A549 (cell line): ENCODE measurements at regions of chr10 and their contacts with region 1.

Region 1: DNA sequence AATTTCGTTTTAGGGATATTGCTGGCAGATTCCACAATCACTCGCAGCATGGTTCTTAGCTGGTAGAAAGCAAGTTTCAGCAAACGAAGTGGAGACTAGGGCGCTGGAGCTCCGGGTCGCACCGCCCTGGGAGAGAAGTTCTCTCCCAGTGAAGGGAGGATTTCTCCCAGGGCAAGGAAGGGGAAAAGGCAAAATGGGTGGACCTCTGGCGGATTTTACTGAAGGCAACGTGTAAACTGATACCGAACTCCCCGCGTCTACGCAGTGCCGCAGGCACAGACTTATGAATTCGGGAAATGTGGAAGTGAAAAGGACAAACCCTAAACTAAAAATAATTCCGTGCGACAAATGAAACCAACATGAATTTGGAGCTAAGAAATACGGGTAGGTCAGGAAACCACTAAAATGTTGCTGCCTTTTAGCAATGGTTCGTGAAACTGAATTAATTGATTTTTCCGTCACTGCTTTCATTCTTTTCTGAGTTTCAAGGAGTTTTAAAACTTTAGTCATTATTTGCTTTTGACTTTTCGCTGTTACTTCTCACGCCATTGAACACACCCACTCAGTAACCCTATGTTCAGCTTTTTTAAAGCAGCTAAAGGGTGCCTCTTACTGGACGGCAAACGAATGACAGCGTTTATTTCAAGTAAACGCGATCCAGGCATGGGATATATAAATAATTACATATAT is at the start of gene MYOF:
- DNase-seq: peak; percentile 87 to 91
- ATAC-seq: peak; percentile 84 to 93
- H3K4me3 ChIP-seq: peak within 1 kb of the TSS; percentile 61
- H3K27ac ChIP-seq: peak within 1 kb of the TSS; percentile 93
- H3K4me1 ChIP-seq: peaks cover 30% of the 10 kb centered on the region
- CTCF ChIP-seq: peak; percentile 63
- EP300 ChIP-seq: no peak
- POLR2A ChIP-seq: peak; percentile 68
- RAD21 ChIP-seq: peak; percentile 85 to 90
- polyA plus RNA-seq, gene MYOF: 229 and 265 TPM in 2 replicates

Region 2: GRCh38 chr10:93180482-93180931 is 301.8 kb before region 1 on chr10:
- CTCF ChIA-PET with region 1: no interaction called
- POLR2A ChIA-PET with region 1: no interaction called
- DNase-seq: no peak
- ATAC-seq: no peak
- H3K4me3 ChIP-seq: no peak overlapping the region
- H3K27ac ChIP-seq: no peak overlapping the region
- H3K4me1 ChIP-seq: no peaks in the 10 kb centered on the region
- CTCF ChIP-seq: no peak
- EP300 ChIP-seq: no peak
- POLR2A ChIP-seq: no peak
- RAD21 ChIP-seq: no peak

Region 3: GRCh38 chr10:93363891-93364648 is 118.2 kb before region 1 on chr10:
- CTCF ChIA-PET with region 1: interaction called, 40 read pairs
- POLR2A ChIA-PET with region 1: no interaction called
- DNase-seq: no peak
- ATAC-seq: no peak
- H3K4me3 ChIP-seq: no peak overlapping the region
- H3K27ac ChIP-seq: no peak overlapping the region
- H3K4me1 ChIP-seq: no peaks in the 10 kb centered on the region
- CTCF ChIP-seq: no peak
- EP300 ChIP-seq: no peak
- POLR2A ChIP-seq: no peak
- RAD21 ChIP-seq: no peak

Region 4: DNA sequence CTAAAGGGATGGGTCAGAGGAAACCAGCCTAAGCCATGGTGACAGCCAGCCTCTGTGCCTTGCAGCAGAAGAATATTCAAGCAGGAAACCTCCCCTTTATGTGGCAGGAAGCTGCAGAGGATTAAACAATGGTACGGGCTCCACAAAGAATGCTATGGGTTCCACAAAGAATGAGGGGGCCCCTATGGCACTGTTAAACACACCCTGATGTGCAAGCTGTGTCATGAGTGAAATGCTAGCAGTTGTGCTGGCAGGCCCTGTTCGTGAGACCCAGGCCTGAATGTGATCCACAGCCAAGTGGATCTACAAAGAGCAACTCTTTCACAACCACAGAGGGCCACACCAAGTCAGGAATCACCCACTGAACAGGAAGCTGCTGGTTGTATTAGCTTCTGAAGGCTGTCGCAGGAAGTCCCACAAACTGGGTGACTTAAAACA is 69.0 kb before region 1 on chr10:
- CTCF ChIA-PET with region 1: interaction called, 22 read pairs
- POLR2A ChIA-PET with region 1: interaction called, 3 read pairs
- DNase-seq: no peak
- ATAC-seq: no peak
- H3K4me3 ChIP-seq: no peak overlapping the region
- H3K27ac ChIP-seq: no peak overlapping the region
- H3K4me1 ChIP-seq: no peaks in the 10 kb centered on the region
- CTCF ChIP-seq: no peak
- EP300 ChIP-seq: no peak
- POLR2A ChIP-seq: no peak
- RAD21 ChIP-seq: no peak

Region 5: DNA sequence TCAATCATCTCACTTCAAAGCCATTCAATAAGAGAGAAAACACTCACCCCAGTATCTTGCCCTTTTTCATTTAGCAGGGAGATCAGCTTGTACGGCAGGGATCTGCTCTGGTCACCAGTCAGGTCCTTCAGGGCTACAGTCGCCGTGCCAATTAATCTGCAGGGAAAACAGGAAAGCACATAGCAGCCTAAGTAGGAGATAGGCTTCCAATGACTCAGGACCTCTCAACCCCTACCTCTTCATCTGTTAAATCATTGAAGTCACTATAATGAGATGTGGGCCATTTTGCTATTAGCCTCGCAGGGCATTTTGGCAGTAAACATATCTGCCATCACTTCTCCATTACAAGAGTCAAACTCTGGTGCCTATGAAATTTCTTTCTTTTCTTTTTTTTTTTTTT is 50.9 kb before region 1 on chr10:
- CTCF ChIA-PET with region 1: interaction called, 31 read pairs
- POLR2A ChIA-PET with region 1: interaction called, 24 read pairs
- DNase-seq: no peak
- ATAC-seq: peak in 1 of 2 experiments; percentile 12; a peak in 2 of 6 replicates
- H3K4me3 ChIP-seq: no peak overlapping the region
- H3K27ac ChIP-seq: peak overlapping the region; percentile 23 to 97; a peak in 4 of 6 replicates
- H3K4me1 ChIP-seq: peaks cover 50% of the 10 kb centered on the region
- CTCF ChIP-seq: no peak
- EP300 ChIP-seq: no peak
- POLR2A ChIP-seq: no peak
- RAD21 ChIP-seq: no peak

Region 6: GRCh38 chr10:93445097-93445960 is 37.0 kb before region 1 on chr10:
- CTCF ChIA-PET with region 1: interaction called, 98 read pairs
- POLR2A ChIA-PET with region 1: interaction called, 21 read pairs
- DNase-seq: peak; percentile 96 to 99
- ATAC-seq: peak; percentile 95 to 97
- H3K4me3 ChIP-seq: no peak overlapping the region
- H3K27ac ChIP-seq: peak overlapping the region; percentile 97 to 98
- H3K4me1 ChIP-seq: peaks cover 68% of the 10 kb centered on the region
- CTCF ChIP-seq: no peak
- EP300 ChIP-seq: peak in 1 of 2 experiments; percentile 36; a peak in 1 of 5 replicates
- POLR2A ChIP-seq: peak; percentile 36
- RAD21 ChIP-seq: peak; percentile 23 to 31; a peak in 3 of 5 replicates

Region 7: GRCh38 chr10:93471110-93471651 is 11.1 kb before region 1 on chr10:
- CTCF ChIA-PET with region 1: interaction called, 76 read pairs
- POLR2A ChIA-PET with region 1: interaction called, 114 read pairs
- DNase-seq: peak; percentile 88 to 96
- ATAC-seq: peak; percentile 59 to 60
- H3K4me3 ChIP-seq: no peak overlapping the region
- H3K27ac ChIP-seq: peak overlapping the region; percentile 92 to 93
- H3K4me1 ChIP-seq: peaks cover 91% of the 10 kb centered on the region
- CTCF ChIP-seq: no peak
- EP300 ChIP-seq: peak; percentile 84 to 92; a peak in 3 of 5 replicates
- POLR2A ChIP-seq: no peak
- RAD21 ChIP-seq: peak; percentile 19 to 52

Region 8: DNA sequence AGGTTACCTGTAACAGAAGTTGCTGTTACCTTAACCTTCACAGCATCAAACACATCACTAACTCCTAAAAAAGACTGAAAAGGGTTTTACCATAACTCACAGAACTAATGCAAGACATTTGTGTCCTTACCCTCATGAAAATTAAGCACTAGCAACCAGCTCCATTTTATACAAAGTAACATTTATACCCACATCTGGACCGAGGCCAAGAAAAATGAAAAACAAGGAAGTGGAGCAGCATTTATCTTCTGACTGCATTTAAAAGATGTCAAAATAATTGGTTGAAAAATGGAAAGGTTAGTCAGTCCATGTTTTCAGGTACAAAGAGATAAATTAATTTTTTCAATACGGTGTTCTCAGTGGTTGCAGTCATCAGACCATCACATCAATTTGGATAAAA is 121.9 kb after region 1 on chr10:
- CTCF ChIA-PET with region 1: no interaction called
- POLR2A ChIA-PET with region 1: no interaction called
- DNase-seq: no peak
- ATAC-seq: no peak
- H3K4me3 ChIP-seq: no peak overlapping the region
- H3K27ac ChIP-seq: no peak overlapping the region
- H3K4me1 ChIP-seq: peaks cover 33% of the 10 kb centered on the region
- CTCF ChIP-seq: no peak
- EP300 ChIP-seq: no peak
- POLR2A ChIP-seq: no peak
- RAD21 ChIP-seq: no peak